ENCODE measurements at regions of chr3 and their contacts with region 1.

Region 1: DNA sequence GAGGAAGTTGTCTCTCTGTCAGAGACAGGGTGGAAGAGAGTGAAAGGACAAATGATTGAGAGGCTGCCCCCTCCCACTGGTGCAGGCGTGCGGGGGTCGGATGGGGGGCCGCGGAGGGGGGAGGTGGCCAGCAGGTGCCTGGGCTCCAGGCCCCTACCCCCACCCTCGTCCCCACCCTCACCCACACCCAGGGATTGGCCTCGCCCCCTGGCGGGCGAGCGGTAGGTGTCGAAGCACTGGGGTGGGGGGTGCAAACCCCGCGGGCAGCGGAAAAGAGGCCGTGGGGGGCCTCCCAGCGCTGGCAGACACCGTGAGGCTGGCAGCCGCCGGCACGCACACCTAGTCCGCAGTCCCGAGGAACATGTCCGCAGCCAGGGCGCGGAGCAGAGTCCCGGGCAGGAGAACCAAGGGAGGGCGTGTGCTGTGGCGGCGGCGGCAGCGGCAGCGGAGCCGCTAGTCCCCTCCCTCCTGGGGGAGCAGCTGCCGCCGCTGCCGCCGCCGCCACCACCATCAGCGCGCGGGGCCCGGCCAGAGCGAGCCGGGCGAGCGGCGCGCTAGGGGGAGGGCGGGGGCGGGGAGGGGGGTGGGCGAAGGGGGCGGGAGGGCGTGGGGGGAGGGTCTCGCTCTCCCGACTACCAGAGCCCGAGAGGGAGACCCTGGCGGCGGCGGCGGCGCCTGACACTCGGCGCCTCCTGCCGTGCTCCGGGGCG is at the start of gene KAT2B:
- DNase-seq: peak; percentile 87
- ATAC-seq: peak; percentile 64
- H3K4me3 Mint-ChIP-seq: peak within 1 kb of the TSS; percentile 96
- H3K27ac Mint-ChIP-seq: peak within 1 kb of the TSS; percentile 98
- H3K4me1 Mint-ChIP-seq: peaks cover 42% of the 10 kb centered on the region
- H3K27me3 Mint-ChIP-seq: no peaks in the 10 kb centered on the region
- total RNA-seq, gene KAT2B: 97.8 to 108 TPM

Region 2: GRCh38 chr3:19972051-19972454 is 67.9 kb before region 1 on chr3:
- POLR2A ChIA-PET with region 1: no interaction called
- DNase-seq: no peak
- ATAC-seq: no peak
- H3K4me3 Mint-ChIP-seq: no peak overlapping the region
- H3K27ac Mint-ChIP-seq: no peak overlapping the region
- H3K4me1 Mint-ChIP-seq: peaks cover 3% of the 10 kb centered on the region
- H3K27me3 Mint-ChIP-seq: no peaks in the 10 kb centered on the region

Region 3: DNA sequence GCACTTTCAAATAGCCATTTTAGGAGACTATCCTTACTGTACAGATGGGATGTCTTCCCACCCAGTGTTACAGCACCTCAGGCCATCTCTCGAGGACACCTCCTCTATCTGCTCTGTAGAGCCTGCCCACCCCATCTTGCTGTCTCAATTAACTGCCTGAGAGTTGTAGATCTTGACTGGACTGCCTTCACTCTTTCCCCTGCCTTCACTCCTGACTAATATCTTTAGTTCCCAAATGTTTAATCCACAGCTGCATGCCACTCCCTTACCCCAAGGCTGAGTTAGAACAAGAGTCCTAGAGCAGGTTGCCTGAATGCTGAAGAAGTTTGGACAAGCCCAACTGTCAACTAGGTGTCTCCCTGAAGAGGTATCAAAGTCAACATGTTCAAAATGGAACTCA is 26.5 kb before region 1 on chr3:
- POLR2A ChIA-PET with region 1: no interaction called
- DNase-seq: no peak
- ATAC-seq: no peak
- H3K4me3 Mint-ChIP-seq: no peak overlapping the region
- H3K27ac Mint-ChIP-seq: no peak overlapping the region
- H3K4me1 Mint-ChIP-seq: no peaks in the 10 kb centered on the region
- H3K27me3 Mint-ChIP-seq: no peaks in the 10 kb centered on the region

Region 4: DNA sequence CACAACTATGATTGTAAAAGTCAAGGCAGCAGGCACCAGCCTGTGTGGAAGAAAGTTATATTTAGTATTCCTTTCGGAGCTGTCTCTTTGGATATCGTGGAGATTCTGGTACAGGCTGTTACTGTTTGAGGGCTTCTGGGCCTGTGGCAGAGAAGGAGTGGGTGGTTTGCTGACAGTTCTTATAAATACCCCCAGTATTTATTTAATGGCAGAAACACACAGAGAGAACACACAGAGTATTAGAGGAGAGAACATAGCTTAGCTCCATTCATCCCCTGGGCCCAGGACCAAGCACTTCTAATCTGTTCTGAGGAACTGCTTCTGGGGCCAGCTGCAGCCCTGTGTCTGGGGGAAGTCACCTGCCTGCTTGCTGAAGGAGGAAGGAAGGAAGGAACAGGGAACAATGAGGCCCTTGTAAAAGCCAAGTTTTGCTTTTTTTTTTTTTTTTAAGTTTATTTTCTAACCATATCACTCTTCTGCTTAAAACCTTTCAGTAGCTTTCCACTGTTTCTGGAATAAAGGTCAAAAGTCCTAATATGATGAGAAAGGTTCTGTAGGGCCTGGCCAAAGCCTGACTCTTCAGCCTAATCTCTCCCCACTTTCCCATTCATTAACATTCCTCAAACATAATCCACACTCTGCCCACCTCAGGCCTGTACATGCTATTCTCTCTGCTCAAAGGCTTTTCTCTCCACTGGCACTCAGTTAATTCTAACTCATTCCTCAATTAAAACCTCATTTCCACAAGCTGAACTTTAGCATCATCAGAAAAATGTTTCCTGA is 16.1 kb before region 1 on chr3:
- POLR2A ChIA-PET with region 1: no interaction called
- DNase-seq: no peak
- ATAC-seq: no peak
- H3K4me3 Mint-ChIP-seq: no peak overlapping the region
- H3K27ac Mint-ChIP-seq: no peak overlapping the region
- H3K4me1 Mint-ChIP-seq: peaks cover 6% of the 10 kb centered on the region
- H3K27me3 Mint-ChIP-seq: no peaks in the 10 kb centered on the region

Region 5: DNA sequence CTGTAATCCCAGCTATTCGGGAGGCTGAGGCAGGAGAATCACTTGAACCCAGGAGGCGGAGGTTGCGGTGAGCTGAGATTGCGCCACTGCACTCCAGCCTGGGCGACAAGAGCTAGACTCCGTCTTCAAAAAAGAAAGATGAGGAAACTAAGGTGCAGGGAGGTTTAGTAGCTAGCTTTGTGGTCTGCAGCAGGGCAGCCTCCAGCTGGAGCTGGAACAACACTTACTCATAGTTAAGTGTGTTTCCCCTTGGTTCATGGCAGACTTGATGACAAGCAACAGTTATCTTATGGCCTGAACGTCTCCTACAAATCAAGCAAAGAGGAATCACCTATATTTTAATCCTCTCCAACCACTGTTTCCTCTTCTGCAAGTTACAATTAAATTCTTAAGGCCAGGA is 12.9 kb after region 1 on chr3:
- POLR2A ChIA-PET with region 1: interaction called, 10 read pairs
- DNase-seq: no peak
- ATAC-seq: no peak
- H3K4me3 Mint-ChIP-seq: no peak overlapping the region
- H3K27ac Mint-ChIP-seq: no peak overlapping the region
- H3K4me1 Mint-ChIP-seq: peaks cover 31% of the 10 kb centered on the region
- H3K27me3 Mint-ChIP-seq: no peaks in the 10 kb centered on the region

Region 6: GRCh38 chr3:20104167-20104661 is 64.3 kb after region 1 on chr3:
- POLR2A ChIA-PET with region 1: interaction called, 77 read pairs
- DNase-seq: no peak
- ATAC-seq: peak; percentile 85
- H3K4me3 Mint-ChIP-seq: peak overlapping the region; percentile 63
- H3K27ac Mint-ChIP-seq: peak overlapping the region; percentile 86
- H3K4me1 Mint-ChIP-seq: peaks cover 70% of the 10 kb centered on the region
- H3K27me3 Mint-ChIP-seq: no peaks in the 10 kb centered on the region